Ovary (tissue), 10 donors: ENCODE measurements at regions of chr10 and their contacts with region 1.

Region 1: GRCh38 chr10:22414146-22414545 is 68.8 kb downstream of the SPAG6 start:
- DNase-seq: no peak
- H3K4me3 ChIP-seq: no peak overlapping the region
- H3K27ac ChIP-seq: no peak overlapping the region
- H3K4me1 ChIP-seq: no peaks in the 10 kb centered on the region
- H3K27me3 ChIP-seq: peaks cover 5% of the 10 kb centered on the region
- CTCF ChIP-seq: no peak
- EP300 ChIP-seq: no peak
- POLR2A ChIP-seq: no peak

Region 2: GRCh38 chr10:22067099-22067498 is 347.0 kb before region 1 on chr10:
- intact Hi-C with region 1: no loop called
- DNase-seq: no peak
- H3K4me3 ChIP-seq: no peak overlapping the region
- H3K27ac ChIP-seq: no peak overlapping the region
- H3K4me1 ChIP-seq: no peaks in the 10 kb centered on the region
- H3K27me3 ChIP-seq: no peaks in the 10 kb centered on the region
- CTCF ChIP-seq: no peak
- EP300 ChIP-seq: no peak
- POLR2A ChIP-seq: no peak

Region 3: DNA sequence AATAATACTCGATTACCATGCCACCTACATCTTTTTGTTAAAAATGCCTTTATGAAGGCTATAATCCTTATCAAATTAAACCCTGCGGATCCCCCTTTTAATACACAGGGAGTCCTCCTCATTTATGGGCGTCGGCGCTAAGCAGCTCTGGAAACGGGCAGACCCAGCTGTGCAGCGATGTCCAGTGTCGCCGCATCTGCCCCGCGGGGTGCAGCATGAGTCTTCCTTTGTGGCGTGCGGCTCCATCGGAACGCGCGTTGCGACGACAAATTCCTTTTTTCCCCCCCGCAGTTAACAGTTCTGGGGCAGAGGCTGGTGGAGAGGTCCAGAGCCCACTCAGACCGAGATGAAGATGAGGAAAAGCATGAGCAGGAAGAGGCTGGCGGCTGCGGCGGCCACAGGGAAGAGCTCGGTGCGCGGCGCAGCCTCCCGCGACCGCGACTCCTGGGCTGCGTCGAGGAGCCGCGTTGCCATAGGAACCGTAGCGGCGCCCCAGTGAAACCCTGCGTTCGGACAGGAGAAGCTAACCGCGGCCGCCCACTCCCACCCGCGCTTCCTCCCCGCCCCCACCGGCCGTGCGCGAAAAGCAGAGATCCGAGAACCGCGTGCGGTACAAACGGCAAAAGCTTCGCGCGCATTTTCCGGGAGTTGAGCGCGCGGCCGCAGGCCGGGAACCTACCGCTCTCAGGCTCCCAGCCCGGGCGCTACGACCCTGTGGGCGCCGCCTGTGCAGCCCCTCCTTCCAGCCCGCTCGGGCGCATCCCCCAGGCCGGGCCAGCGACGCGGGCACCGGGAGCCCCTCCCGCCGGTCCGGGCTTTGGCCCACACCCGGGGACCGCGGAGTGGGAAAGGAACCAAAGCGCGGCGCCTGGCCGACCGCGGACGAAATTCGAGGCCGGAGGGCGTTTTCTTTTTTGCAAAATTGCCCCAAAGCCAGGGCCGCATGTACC is 61.8 kb after region 1 on chr10:
- intact Hi-C with region 1: no loop called
- DNase-seq: peak in 1 of 5 donors; percentile 13
- H3K4me3 ChIP-seq: peak overlapping the region; percentile 36
- H3K27ac ChIP-seq: no peak overlapping the region
- H3K4me1 ChIP-seq: peaks cover 1% of the 10 kb centered on the region
- H3K27me3 ChIP-seq: peaks cover 2% of the 10 kb centered on the region
- CTCF ChIP-seq: no peak
- EP300 ChIP-seq: no peak
- POLR2A ChIP-seq: no peak

Region 4: GRCh38 chr10:22489467-22489866 is 75.3 kb after region 1 on chr10:
- intact Hi-C with region 1: loop called in 1 of 4 experiments (anchors 5 kb)
- DNase-seq: no peak
- H3K4me3 ChIP-seq: no peak overlapping the region
- H3K27ac ChIP-seq: no peak overlapping the region
- H3K4me1 ChIP-seq: no peaks in the 10 kb centered on the region
- H3K27me3 ChIP-seq: no peaks in the 10 kb centered on the region
- CTCF ChIP-seq: no peak
- EP300 ChIP-seq: no peak
- POLR2A ChIP-seq: no peak